ENCODE measurements at regions of chr4 and their contacts with region 1.

Region 1: DNA sequence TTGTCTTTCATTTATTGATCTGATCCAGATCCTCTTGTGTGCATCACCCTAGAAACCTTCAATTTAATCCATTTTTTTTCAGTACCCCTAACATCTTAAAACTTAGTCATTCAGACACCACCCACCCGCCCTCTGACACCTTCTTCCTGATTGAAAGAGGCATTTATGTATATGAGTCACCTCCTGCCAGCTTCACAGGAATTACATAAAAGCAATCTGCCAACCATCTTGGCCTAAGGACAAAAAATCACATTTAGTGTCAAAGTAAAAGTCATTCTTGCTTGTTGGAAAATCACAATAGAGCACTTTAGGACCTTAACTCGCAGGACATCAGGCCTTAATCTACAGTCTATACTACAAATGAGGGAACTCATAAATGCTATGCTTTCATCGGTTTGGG is 52.1 kb downstream of the NDST3 start:
- DNase-seq: no peak
- H3K4me3 ChIP-seq: no peak overlapping the region
- CTCF ChIP-seq: no peak
- POLR2A ChIP-seq: no peak

Region 2: GRCh38 chr4:116925900-116926457 is 1160.4 kb before region 1 on chr4:
- intact Hi-C with region 1: no loop called
- DNase-seq: peak in 1 of 2 donors; percentile 78
- H3K4me3 ChIP-seq: no peak overlapping the region
- CTCF ChIP-seq: no peak
- POLR2A ChIP-seq: no peak

Region 3: DNA sequence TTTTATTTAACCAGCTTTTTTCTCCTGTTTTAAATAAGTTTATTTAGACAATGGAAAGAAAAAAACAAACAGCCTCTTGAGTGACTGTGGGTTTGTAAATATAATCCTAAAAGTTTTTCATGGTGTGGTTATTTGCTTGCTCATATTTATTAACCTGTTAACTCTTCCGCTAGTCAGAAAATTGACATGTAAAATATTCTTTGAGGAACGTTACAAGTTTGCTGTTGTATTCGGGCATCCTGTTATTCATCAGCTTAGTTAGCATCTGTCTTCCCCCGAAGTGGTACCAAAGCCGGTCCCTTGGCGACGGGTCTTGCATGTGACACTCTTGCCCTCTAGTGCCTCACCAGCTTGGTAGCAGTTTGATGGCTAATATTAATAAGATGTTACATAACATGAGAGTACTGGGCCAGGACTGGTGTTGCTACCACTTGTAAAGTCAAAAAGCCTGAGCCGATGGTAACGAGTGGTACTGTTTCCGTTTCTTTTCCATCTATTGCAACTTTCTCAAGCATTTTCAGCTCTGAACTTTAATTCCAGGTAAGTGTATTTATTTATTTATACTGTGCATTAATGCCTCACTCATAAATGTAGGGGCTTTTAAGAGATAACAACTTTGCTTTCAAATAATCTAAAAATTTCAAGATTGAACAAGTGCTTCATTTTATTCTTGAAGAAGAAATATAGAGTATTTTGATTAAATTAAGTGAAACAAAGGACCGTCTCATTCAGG is 52.1 kb before region 1 on chr4 and contains the start of gene NDST3:
- intact Hi-C with region 1: loop called (anchors 2 kb)
- DNase-seq: no peak
- H3K4me3 ChIP-seq: no peak within 1 kb of the TSS
- CTCF ChIP-seq: no peak
- POLR2A ChIP-seq: no peak
- total RNA-seq, gene NDST3: 0.25 TPM in 1 of 4 donors, not detected in the others

Measured in lower leg skin (tissue), 4 donors.